HepG2 (cell line): ENCODE measurements at regions of chr11 and their contacts with region 1.

Region 1: GRCh38 chr11:64688534-64688982 is 34.4 kb downstream of the NRXN2 start:
- DNase-seq: peak; percentile 73
- ATAC-seq: peak; percentile 97
- H3K4me3 ChIP-seq: peak overlapping the region; percentile 40 to 61 (median 46); a peak in 5 of 6 replicates
- H3K27ac ChIP-seq: no peak overlapping the region
- H3K4me1 ChIP-seq: no peaks in the 10 kb centered on the region; the same call in 1 of the 2 replicates
- H3K27me3 ChIP-seq: peaks cover 11 to 83% of the 10 kb centered on the region in 2 experiments; a peak in 4 of 5 replicates
- CTCF ChIP-seq: peak; percentile 92
- EP300 ChIP-seq: no peak
- POLR2A ChIP-seq: no peak
- RAD21 ChIP-seq: peak; percentile 81

Region 2: GRCh38 chr11:64726211-64726641 is 37.7 kb after region 1 on chr11:
- CTCF ChIA-PET with region 1: interaction called, 4 read pairs
- POLR2A ChIA-PET with region 1: no interaction called
- in situ Hi-C with region 1: no loop called
- intact Hi-C with region 1: loop called (anchors 1 kb)
- DNase-seq: no peak
- ATAC-seq: peak; percentile 55
- H3K4me3 ChIP-seq: peak overlapping the region in 1 of 3 experiments; percentile 46; a peak in 1 of 6 replicates
- H3K27ac ChIP-seq: no peak overlapping the region
- H3K4me1 ChIP-seq: peaks cover 34% of the 10 kb centered on the region
- H3K27me3 ChIP-seq: peaks cover under 1 to 29% of the 10 kb centered on the region in 2 experiments
- CTCF ChIP-seq: 0 out of 2 replicates have a peak, but pooled peaks have one; percentile 3
- EP300 ChIP-seq: no peak
- POLR2A ChIP-seq: no peak
- RAD21 ChIP-seq: no peak

Region 3: DNA sequence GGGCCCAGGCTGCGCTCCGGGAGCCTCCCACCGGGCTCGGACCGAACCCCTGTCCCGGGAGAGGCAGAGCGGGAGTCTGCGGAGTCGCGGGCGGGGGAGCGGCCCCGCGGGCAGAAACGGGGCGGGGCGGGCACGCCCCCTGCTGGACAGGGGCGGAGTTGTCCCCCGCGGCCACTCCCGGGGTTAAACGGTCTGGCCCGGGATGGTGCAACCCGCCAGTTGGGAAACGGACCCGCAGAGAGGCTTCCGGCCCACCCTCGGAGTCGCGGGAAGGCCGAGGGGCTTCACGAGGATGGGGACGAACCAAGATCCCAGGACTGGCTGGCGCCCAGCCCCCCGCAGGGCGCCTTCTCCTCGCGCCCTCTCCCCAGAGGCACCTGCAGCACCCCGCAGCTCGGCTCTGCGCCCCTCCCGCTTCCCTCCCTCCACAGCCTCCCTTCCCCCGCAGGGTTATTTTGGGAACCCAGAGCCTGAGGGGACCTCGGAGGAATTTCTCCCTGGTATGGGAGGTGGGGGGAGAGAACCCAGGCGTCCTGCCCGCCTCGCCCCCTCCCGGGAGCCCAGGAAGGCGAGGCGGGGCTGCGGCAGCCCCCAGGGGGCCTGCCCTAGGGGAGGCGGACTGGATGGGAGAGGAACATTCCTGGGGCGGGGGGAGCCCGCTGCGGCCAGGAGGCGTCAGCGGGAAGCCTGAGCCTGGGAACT is 54.5 kb after region 1 on chr11:
- CTCF ChIA-PET with region 1: interaction called, 23 read pairs
- POLR2A ChIA-PET with region 1: no interaction called
- in situ Hi-C with region 1: no loop called
- intact Hi-C with region 1: no loop called
- DNase-seq: no peak
- ATAC-seq: peak; percentile 74
- H3K4me3 ChIP-seq: peak overlapping the region; percentile 43 to 74 (median 59)
- H3K27ac ChIP-seq: no peak overlapping the region
- H3K4me1 ChIP-seq: peaks cover 36% of the 10 kb centered on the region
- H3K27me3 ChIP-seq: peaks cover 14 to 79% of the 10 kb centered on the region in 2 experiments
- CTCF ChIP-seq: peak; percentile 84
- EP300 ChIP-seq: no peak
- POLR2A ChIP-seq: no peak
- RAD21 ChIP-seq: peak; percentile 75